A673 (cell line): ENCODE measurements at regions of chr20 and their contacts with region 1.

Region 1: DNA sequence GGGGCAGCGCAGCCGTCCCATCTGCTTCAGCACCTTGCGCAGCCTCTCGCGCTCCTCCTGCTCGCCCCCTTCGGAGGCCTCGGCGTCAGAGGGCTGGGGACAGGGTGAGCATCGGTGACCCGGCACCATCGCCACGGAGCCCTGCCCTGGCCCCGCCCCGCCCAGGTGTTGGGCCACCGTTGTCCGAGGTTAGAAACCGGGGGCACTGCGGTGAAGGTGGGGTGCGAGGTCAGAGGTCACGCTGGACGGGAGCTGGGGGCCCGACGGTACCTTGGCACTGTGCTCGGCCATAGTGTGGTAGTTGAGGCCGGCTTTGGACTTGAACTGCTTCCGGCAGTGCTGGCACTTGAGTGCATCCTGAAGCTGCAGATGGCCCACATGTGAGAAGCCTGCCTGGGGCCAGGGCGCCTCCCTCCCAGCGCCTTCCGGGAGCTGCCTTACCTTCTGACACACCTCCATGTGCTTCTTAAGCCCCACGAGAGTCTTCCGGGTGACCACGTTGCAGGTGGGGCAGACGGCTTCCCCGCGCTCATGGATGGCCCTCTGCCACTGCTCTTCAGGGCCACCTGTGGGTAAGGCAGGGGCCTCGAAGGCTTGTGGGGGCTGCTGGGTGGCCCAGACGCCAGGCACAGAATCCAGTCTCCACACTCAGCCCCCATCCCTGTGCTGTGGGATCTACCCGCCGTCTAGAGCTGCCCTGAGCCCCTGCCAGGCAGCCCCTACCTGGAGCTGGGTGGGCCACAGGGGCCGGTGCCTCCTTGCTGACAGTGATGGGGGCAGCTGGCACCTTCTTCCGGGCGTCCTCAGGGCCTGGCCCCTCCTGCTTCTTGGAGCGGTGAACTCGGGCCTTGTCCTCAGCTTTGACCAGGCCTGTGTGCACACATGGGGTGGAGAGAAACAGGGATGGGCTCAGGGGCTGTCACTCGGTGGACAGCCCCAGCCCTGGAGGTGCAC is 6.1 kb downstream of the ZNF512B start:
- DNase-seq: no peak
- H3K4me3 ChIP-seq: no peak overlapping the region
- H3K27ac ChIP-seq: no peak overlapping the region
- H3K4me1 ChIP-seq: no peaks in the 10 kb centered on the region
- H3K27me3 ChIP-seq: no peaks in the 10 kb centered on the region
- CTCF ChIP-seq: no peak

Region 2: DNA sequence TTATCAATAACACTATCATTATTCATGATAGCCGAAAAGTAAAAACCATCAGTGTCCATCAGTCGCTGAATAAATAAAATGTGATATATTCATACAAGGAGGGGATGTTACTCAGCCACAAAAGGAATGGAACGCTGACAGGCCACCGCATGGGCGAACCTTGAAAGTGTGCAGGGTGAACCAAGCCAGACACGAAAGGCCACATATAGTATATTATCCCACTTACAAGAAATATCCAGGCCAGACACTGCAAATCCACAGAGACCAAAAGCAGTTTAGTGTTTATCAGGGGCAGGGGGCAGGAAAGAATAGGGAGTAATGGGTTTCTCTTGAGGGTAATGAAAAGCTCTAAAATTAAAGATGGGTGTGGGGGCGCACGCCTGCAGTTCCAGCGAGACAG is 80.1 kb after region 1 on chr20:
- CTCF ChIA-PET with region 1: no interaction called
- POLR2A ChIA-PET with region 1: interaction called, 17 read pairs
- intact Hi-C with region 1: no loop called
- DNase-seq: no peak
- H3K4me3 ChIP-seq: no peak overlapping the region
- H3K27ac ChIP-seq: no peak overlapping the region
- H3K4me1 ChIP-seq: peaks cover 17% of the 10 kb centered on the region
- H3K27me3 ChIP-seq: peaks cover 45% of the 10 kb centered on the region
- CTCF ChIP-seq: no peak